HEK293 (cell line): ENCODE measurements at regions of chr22 and their contacts with region 1.

Region 1: GRCh38 chr22:19291580-19292457 is at the start of gene CLTCL1:
- H3K4me3 ChIP-seq: peak within 1 kb of the TSS; percentile 83
- H3K27ac ChIP-seq: peak within 1 kb of the TSS; percentile 56; the same call in 1 of the 2 replicates
- H3K4me1 ChIP-seq: peaks cover 3% of the 10 kb centered on the region; the same call in 1 of the 2 replicates
- CTCF ChIP-seq: no peak

Region 2: GRCh38 chr22:19152942-19153883 is 138.6 kb before region 1 on chr22:
- CTCF ChIA-PET with region 1: interaction called, 10 read pairs
- POLR2A ChIA-PET with region 1: no interaction called
- H3K4me3 ChIP-seq: no peak overlapping the region
- H3K27ac ChIP-seq: no peak overlapping the region
- H3K4me1 ChIP-seq: no peaks in the 10 kb centered on the region
- CTCF ChIP-seq: no peak

Region 3: GRCh38 chr22:19543970-19544708 is 252.3 kb after region 1 on chr22:
- CTCF ChIA-PET with region 1: no interaction called
- POLR2A ChIA-PET with region 1: no interaction called
- H3K4me3 ChIP-seq: no peak overlapping the region
- H3K27ac ChIP-seq: no peak overlapping the region
- H3K4me1 ChIP-seq: no peaks in the 10 kb centered on the region
- CTCF ChIP-seq: no peak